Activated CD4-positive, alpha-beta T cell treated with anti-CD3 and anti-CD28 coated beads, Interleukin-2, amount 10 ng/mL, durations not matched to agents 7 days and 5 days (primary cell): ENCODE measurements at regions of chr6 and their contacts with region 1.

Region 1: GRCh38 chr6:41936073-41936837 is 5.4 kb downstream of the CCND3 start:
- DNase-seq: peak; percentile 95
- H3K4me3 Mint-ChIP-seq: peak overlapping the region; percentile 100
- H3K27ac Mint-ChIP-seq: peak overlapping the region; percentile 97
- H3K4me1 Mint-ChIP-seq: peaks cover 63% of the 10 kb centered on the region
- H3K27me3 Mint-ChIP-seq: no peaks in the 10 kb centered on the region

Region 2: DNA sequence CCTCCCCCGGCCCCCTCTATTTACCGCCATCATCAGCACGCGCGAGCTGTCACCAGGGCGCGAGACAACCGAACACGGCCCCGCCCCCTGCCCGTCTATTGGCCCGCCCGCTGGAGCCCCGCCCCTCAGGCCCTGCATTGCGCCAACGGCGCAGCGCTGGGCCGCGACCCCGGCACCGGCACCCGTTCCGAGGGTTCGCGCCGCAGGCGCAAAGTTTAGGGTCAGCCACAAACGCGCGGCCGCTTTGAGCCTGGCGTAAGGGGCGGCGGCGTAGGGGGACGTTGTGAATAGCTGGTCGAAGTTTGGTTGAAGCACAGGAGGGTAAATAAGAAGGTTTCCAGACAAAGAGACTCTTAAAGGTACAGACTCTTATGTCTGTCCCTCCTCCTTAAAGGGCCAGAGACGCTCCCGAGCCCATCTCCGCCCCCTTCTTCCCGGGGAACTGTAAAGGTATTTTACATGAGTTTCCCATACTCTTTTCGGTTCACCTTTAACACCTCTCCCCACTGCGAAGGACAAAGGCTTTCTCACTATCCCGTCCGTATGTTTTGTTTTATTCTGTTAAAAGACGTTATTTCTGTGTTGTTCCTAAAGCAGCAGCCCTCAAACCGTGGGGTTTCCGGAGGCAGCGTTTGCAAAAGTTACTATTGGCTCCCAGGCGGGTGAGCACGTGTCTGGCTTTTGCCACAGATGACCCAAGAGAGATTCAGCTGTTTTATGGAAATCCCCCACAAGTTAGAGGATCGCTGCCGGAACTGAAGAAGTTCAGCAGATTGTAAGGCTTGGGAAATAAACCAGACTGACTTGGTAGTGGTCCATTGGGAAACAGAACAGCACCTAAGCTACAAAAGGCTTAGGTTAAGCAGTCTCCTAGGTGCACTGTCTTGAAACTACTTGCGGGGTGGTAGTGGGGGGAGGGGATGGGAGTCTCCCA is 40.7 kb before region 1 on chr6 and contains the start of gene USP49:
- CTCF ChIA-PET with region 1: interaction called, 16 read pairs
- POLR2A ChIA-PET with region 1: no interaction called
- DNase-seq: peak; percentile 92
- H3K4me3 Mint-ChIP-seq: no peak within 1 kb of the TSS
- H3K27ac Mint-ChIP-seq: peak within 1 kb of the TSS; percentile 82
- H3K4me1 Mint-ChIP-seq: peaks cover 16% of the 10 kb centered on the region
- H3K27me3 Mint-ChIP-seq: no peaks in the 10 kb centered on the region
- total RNA-seq, gene USP49: 6.3 to 7.0 TPM

Region 3: DNA sequence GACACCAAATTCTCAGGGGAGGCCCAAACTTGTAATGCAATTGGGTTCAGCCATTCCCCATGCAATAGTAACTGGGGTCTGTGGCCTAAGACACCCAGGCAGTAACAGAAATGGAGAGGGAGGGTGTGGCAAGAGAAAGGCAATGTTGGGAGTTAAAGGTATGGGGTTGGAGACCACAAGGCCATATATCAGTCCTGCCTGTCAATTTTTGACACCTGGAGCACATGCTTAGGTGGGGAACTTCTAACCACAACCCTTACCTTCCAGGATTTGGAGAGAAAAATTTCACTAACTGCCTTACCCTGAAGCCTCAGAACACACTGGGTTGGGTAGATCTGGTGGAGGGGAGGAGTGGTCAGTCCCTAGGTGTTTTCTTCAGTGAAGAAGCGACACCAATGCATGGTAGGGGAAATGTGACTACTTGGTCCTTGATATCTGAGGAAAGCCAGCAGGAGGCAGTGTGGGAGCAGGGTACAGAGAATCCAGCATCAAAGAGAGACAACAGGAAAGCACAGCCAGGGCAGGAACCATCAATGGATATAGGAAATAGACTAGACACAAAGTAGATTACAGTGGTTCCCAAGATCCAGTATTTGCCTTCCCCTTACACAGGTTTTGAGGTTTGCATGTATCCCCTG is 34.3 kb before region 1 on chr6:
- CTCF ChIA-PET with region 1: interaction called, 16 read pairs
- POLR2A ChIA-PET with region 1: no interaction called
- DNase-seq: peak; percentile 75
- H3K4me3 Mint-ChIP-seq: no peak overlapping the region
- H3K27ac Mint-ChIP-seq: no peak overlapping the region
- H3K4me1 Mint-ChIP-seq: peaks cover 32% of the 10 kb centered on the region
- H3K27me3 Mint-ChIP-seq: no peaks in the 10 kb centered on the region

Region 4: GRCh38 chr6:42028234-42029061 is 92.2 kb after region 1 on chr6:
- CTCF ChIA-PET with region 1: interaction called, 11 read pairs
- POLR2A ChIA-PET with region 1: interaction called, 4 read pairs
- DNase-seq: no peak
- H3K4me3 Mint-ChIP-seq: peak overlapping the region; percentile 52
- H3K27ac Mint-ChIP-seq: peak overlapping the region; percentile 90
- H3K4me1 Mint-ChIP-seq: peaks cover 92% of the 10 kb centered on the region
- H3K27me3 Mint-ChIP-seq: no peaks in the 10 kb centered on the region